Upper lobe of right lung (tissue), 1 donor: ENCODE measurements at regions of chr9 and their contacts with region 1.

Region 1: GRCh38 chr9:70111042-70111602 is 67.5 kb downstream of the MAMDC2 start:
- DNase-seq: peak; percentile 89
- ATAC-seq: peak; percentile 84
- H3K4me3 ChIP-seq: no peak overlapping the region
- H3K27ac ChIP-seq: no peak overlapping the region
- H3K4me1 ChIP-seq: peaks cover 4% of the 10 kb centered on the region
- H3K27me3 ChIP-seq: no peaks in the 10 kb centered on the region
- CTCF ChIP-seq: peak; percentile 84

Region 2: DNA sequence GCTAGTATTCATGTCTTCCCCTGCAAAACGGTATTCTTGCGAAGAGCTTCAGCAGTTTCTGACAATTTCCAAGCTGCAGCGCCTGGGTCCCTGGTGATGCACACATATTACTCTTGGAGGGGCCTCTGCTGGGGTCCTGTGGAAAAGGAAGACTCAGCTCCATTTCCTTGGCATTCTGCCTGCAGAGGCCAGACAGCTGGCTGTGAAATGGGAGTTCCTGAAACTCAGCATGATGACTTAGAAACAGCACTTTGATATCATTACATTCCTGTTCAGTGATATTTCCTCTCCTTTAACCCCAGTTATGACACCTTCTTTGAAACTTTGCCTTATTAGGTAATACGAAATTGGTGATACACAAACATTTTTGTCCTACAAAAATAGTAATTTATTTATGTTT is 537.5 kb before region 1 on chr9:
- intact Hi-C with region 1: no loop called
- DNase-seq: no peak
- ATAC-seq: no peak
- H3K4me3 ChIP-seq: no peak overlapping the region
- H3K27ac ChIP-seq: no peak overlapping the region
- H3K4me1 ChIP-seq: no peaks in the 10 kb centered on the region
- H3K27me3 ChIP-seq: no peaks in the 10 kb centered on the region
- CTCF ChIP-seq: no peak

Region 3: GRCh38 chr9:69961830-69962229 is 149.3 kb before region 1 on chr9:
- intact Hi-C with region 1: loop called (anchors 10 kb)
- DNase-seq: no peak
- ATAC-seq: no peak
- H3K4me3 ChIP-seq: no peak overlapping the region
- H3K27ac ChIP-seq: no peak overlapping the region
- H3K4me1 ChIP-seq: no peaks in the 10 kb centered on the region
- H3K27me3 ChIP-seq: no peaks in the 10 kb centered on the region
- CTCF ChIP-seq: no peak